CD14-positive monocyte (primary cell): ENCODE measurements at regions of chr19 and their contacts with region 1.

Region 1: DNA sequence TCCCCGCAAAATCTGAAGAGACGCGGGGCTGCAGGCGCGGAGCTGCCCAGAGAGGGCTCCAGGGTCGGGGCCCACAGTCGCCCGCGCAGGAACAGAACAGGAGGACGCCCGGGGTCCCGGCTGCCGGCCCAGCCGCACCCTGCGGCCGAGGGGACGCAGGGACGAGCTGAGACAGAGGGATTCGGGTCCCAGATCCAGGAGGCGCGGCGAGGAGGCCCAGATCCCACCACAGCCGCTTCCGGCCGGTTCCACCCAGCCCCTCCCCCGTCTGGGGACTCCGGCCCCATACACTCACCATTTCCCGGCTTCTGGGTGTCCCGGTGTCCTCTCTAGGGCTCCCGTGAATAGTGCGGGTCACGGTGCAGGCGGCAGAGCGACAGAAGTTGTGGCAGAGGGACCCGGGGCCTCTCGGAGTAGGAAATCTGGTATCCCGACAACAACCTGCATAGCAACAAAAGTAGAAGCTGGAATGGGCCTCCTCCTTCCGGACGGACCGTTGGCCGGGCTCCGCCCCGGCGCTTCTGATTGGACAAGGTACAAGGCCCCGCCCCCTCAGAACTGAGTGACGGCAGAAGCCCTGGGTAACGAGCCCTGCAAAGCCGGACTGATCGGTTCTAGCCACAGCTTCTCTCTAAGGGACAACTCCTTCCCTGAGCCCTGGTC is at the start of gene ZNF20:
- DNase-seq: peak; percentile 86 to 93 (median 86)
- H3K4me3 ChIP-seq: peak within 1 kb of the TSS; percentile 84 to 99 (median 93)
- H3K4me3 Mint-ChIP-seq: peak within 1 kb of the TSS; percentile 96 to 97
- H3K27ac ChIP-seq: peak within 1 kb of the TSS; percentile 32 to 78
- H3K27ac Mint-ChIP-seq: peak within 1 kb of the TSS; percentile 83 to 94 (median 89)
- H3K4me1 ChIP-seq: peaks cover 23 to 25% of the 10 kb centered on the region in 2 donors
- H3K4me1 Mint-ChIP-seq: peaks cover 36% of the 10 kb centered on the region
- H3K27me3 ChIP-seq: no peaks in the 10 kb centered on the region
- H3K27me3 Mint-ChIP-seq: peaks cover 0 to 3% (median 1%) of the 10 kb centered on the region in 3 donors
- CTCF ChIP-seq: no peak
- polyA plus RNA-seq, gene ZNF20: 0.86 to 2.6 (median 1.3) TPM

Region 2: DNA sequence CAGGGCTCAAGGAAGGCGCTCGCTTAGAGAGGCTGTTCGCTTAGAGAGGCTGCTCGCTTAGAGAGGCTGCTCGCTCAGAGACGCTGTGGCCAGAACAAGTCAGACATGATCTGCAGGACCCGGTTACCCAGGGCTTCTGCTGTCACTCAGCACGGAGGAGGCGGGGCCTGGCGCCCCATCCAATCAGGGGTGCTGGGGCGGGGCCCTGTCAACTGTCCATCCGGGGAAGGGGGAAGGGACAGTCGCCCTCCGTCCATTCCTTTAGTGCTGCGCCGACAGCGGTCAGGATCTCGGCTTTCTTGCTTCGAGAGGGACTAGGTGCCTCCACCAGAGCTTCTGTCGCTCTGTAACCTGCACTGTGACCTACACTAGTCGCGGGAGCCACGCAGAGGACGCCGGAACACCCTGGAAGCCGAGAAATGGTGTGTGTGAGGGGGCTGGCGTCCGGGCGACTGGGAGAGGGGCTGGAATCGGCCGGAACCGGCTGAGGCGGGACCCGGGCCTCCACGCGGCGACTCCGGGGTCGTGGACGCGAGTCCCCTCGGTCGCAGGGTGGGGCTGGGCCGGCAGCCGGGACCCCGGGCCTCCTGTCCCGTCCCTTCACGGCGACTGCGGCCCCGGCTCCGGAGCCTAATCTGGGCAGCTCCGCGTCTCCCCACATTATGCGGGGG is 325.9 kb before region 1 on chr19 and contains the start of gene ZNF440:
- intact Hi-C with region 1: loop called in 1 of 2 experiments (anchors 5 kb)
- DNase-seq: peak; percentile 80 to 89 (median 80)
- H3K4me3 ChIP-seq: peak within 1 kb of the TSS; percentile 71 to 92 (median 84)
- H3K4me3 Mint-ChIP-seq: peak within 1 kb of the TSS; percentile 93 to 95
- H3K27ac ChIP-seq: peak within 1 kb of the TSS; percentile 72 to 80
- H3K27ac Mint-ChIP-seq: peak within 1 kb of the TSS; percentile 81 to 96 (median 89)
- H3K4me1 ChIP-seq: peaks cover 9 to 15% of the 10 kb centered on the region in 2 donors
- H3K4me1 Mint-ChIP-seq: peaks cover 20% of the 10 kb centered on the region
- H3K27me3 ChIP-seq: no peaks in the 10 kb centered on the region
- H3K27me3 Mint-ChIP-seq: peaks cover 0 to 2% (median 0%) of the 10 kb centered on the region in 3 donors
- CTCF ChIP-seq: no peak
- polyA plus RNA-seq, gene ZNF440: 2.4 to 4.1 (median 3.4) TPM

Region 3: DNA sequence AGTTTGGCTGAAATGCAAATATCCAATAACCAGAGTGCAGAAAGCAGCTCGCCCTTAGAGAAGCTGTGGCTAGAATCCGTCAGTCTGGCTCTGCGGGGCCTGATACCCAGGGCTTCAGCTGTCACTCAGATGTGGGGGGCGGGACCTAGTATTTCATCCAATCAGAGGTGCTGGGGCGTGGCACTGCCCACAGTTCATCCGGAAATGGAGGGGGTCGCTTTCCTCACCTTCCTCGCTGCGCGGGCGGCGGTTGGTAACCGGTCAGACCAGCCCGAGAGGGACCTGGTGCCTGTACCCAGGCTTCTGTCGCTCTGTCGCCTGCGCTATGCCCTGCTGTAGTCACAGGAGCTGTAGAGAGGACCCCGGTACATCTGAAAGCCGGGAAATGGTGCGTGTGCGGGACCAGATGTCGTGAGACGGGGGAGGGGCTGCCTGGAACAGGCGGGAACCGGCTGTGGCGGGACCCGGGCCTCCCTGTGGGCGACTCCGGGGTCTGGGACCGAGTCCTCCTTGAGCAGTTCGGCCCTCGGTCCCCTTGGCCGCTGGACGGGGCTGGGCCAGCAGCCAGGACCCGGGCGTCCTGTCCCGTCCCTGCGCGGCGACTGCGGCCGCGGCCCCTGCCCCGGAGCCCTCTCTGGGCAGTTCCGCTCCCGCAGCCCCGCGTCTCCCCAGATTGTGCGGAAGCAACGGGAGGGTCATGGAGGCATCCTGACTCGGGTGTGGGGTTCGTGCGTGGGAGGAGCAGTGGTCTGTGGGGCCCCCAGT is 214.9 kb before region 1 on chr19 and contains the start of gene ZNF700:
- intact Hi-C with region 1: loop called (anchors 1 to 5 kb)
- DNase-seq: peak; percentile 81 to 86 (median 81)
- H3K4me3 ChIP-seq: peak within 1 kb of the TSS; percentile 83 to 97 (median 91)
- H3K4me3 Mint-ChIP-seq: peak within 1 kb of the TSS; percentile 95 to 96
- H3K27ac ChIP-seq: peak within 1 kb of the TSS; percentile 93 to 95
- H3K27ac Mint-ChIP-seq: peak within 1 kb of the TSS; percentile 91 to 99 (median 97)
- H3K4me1 ChIP-seq: peaks cover 26 to 37% of the 10 kb centered on the region in 2 donors
- H3K4me1 Mint-ChIP-seq: peaks cover 30% of the 10 kb centered on the region
- H3K27me3 ChIP-seq: no peaks in the 10 kb centered on the region
- H3K27me3 Mint-ChIP-seq: no peaks in the 10 kb centered on the region
- CTCF ChIP-seq: no peak
- polyA plus RNA-seq, gene ZNF700: 1.1 to 18.3 (median 1.2) TPM

Region 4: GRCh38 chr19:11987405-11988281 is 152.4 kb before region 1 on chr19:
- intact Hi-C with region 1: no loop called
- DNase-seq: peak; percentile 90 to 96 (median 94)
- H3K4me3 ChIP-seq: peak overlapping the region; percentile 58 to 99 (median 83)
- H3K4me3 Mint-ChIP-seq: peak overlapping the region; percentile 97 to 99
- H3K27ac ChIP-seq: peak overlapping the region; percentile 81 to 92
- H3K27ac Mint-ChIP-seq: peak overlapping the region; percentile 91 to 98 (median 95)
- H3K4me1 ChIP-seq: peaks cover 9 to 13% of the 10 kb centered on the region in 2 donors
- H3K4me1 Mint-ChIP-seq: peaks cover 15% of the 10 kb centered on the region
- H3K27me3 ChIP-seq: no peaks in the 10 kb centered on the region
- H3K27me3 Mint-ChIP-seq: peaks cover 0 to 8% (median 2%) of the 10 kb centered on the region in 3 donors
- CTCF ChIP-seq: no peak

Region 5: DNA sequence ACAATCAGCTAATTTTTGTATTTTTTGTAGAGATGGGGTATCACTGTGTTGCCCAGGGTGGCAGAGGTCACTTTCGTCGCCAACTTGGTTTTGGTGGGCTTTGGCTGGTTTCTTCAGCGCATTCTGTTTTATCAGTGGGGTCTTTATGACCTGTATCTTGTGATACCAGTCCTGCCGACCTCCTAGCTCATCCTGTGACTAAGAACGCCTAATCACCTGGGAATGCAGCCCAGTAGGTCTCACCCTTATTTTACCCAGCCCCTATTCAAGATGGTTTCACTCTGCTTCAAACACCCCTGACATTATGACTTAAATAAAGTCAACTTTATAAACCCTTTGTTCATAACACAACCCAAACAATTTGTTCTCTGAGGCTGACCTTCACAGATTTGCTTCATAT is 84.2 kb before region 1 on chr19:
- intact Hi-C with region 1: loop called (anchors 2 kb)
- DNase-seq: no peak
- H3K4me3 ChIP-seq: no peak overlapping the region
- H3K4me3 Mint-ChIP-seq: no peak overlapping the region
- H3K27ac ChIP-seq: no peak overlapping the region
- H3K27ac Mint-ChIP-seq: no peak overlapping the region
- H3K4me1 ChIP-seq: peaks cover 9 to 20% of the 10 kb centered on the region in 2 donors
- H3K4me1 Mint-ChIP-seq: peaks cover 27% of the 10 kb centered on the region
- H3K27me3 ChIP-seq: peaks cover 0 to 3% of the 10 kb centered on the region in 2 donors
- H3K27me3 Mint-ChIP-seq: peaks cover 19 to 46% (median 20%) of the 10 kb centered on the region in 3 donors
- CTCF ChIP-seq: no peak

Region 6: GRCh38 chr19:12112701-12113100 is 27.3 kb before region 1 on chr19:
- intact Hi-C with region 1: no loop called
- DNase-seq: no peak
- H3K4me3 ChIP-seq: peak overlapping the region in 1 of 3 experiments; percentile 10
- H3K4me3 Mint-ChIP-seq: no peak overlapping the region
- H3K27ac ChIP-seq: no peak overlapping the region
- H3K27ac Mint-ChIP-seq: no peak overlapping the region
- H3K4me1 ChIP-seq: no peaks in the 10 kb centered on the region
- H3K4me1 Mint-ChIP-seq: no peaks in the 10 kb centered on the region
- H3K27me3 ChIP-seq: no peaks in the 10 kb centered on the region
- H3K27me3 Mint-ChIP-seq: peaks cover 0 to 1% (median 0%) of the 10 kb centered on the region in 3 donors
- CTCF ChIP-seq: no peak

Region 7: GRCh38 chr19:12230751-12231733 is 91.0 kb after region 1 on chr19:
- intact Hi-C with region 1: no loop called
- DNase-seq: no peak
- H3K4me3 ChIP-seq: no peak overlapping the region
- H3K4me3 Mint-ChIP-seq: no peak overlapping the region
- H3K27ac ChIP-seq: no peak overlapping the region
- H3K27ac Mint-ChIP-seq: no peak overlapping the region
- H3K4me1 ChIP-seq: no peaks in the 10 kb centered on the region
- H3K4me1 Mint-ChIP-seq: no peaks in the 10 kb centered on the region
- H3K27me3 ChIP-seq: no peaks in the 10 kb centered on the region
- H3K27me3 Mint-ChIP-seq: peaks cover 0 to 3% (median 0%) of the 10 kb centered on the region in 3 donors
- CTCF ChIP-seq: no peak

Region 8: DNA sequence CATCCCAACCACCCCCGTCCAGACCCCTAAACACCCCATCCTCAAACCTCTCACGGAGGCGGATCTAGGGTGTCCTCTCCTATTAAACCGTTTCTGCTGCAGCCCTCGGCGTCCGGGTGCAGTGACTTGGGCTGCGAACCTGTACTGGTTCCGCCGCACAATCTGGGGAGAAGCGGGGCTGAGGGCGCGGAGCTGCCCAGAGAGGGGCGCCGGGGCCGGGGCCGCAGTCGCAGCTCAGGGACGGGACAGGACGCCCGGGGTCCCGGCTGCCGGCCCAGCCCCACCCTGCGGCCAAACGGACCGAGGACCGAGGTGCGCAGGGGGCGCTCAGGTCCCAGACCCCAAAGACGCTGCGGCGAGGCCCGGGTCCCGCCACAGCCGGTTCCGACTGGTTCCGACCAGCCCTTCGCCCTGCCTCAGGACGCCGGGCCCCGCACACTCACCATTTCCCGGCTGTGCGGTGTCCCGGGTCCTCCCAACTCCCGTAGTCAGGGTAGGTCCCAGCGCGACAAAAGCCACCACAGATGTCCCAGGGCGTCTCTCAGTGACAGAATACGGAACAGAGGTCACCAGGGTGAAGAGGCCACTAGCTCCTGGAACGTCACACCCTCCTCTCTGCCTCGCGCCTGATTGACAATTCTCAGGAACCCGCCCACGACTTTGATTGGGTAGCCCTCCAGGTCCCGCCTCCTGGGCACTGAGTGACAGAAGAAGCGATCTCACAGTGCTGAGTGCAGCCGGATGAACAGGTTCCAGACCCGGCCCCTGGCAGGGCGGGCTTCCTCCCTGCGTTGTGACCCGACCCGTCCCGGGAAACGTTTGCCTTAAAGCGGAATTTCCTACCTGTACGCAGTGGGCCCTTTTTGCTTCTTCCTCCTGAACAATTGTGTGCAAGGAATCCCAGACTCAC is 154.5 kb after region 1 on chr19 and contains the start of gene ZNF44:
- intact Hi-C with region 1: no loop called
- DNase-seq: peak; percentile 94 to 97 (median 96)
- H3K4me3 ChIP-seq: peak within 1 kb of the TSS; percentile 76 to 91 (median 80)
- H3K4me3 Mint-ChIP-seq: peak within 1 kb of the TSS; percentile 100
- H3K27ac ChIP-seq: peak within 1 kb of the TSS; percentile 69 to 82
- H3K27ac Mint-ChIP-seq: peak within 1 kb of the TSS; percentile 96 to 100 (median 98)
- H3K4me1 ChIP-seq: peaks cover 8 to 11% of the 10 kb centered on the region in 2 donors
- H3K4me1 Mint-ChIP-seq: peaks cover 34% of the 10 kb centered on the region
- H3K27me3 ChIP-seq: no peaks in the 10 kb centered on the region
- H3K27me3 Mint-ChIP-seq: peaks cover 0 to 8% (median 6%) of the 10 kb centered on the region in 3 donors
- CTCF ChIP-seq: no peak
- polyA plus RNA-seq, gene ZNF44: 6.7 to 10.1 (median 9.7) TPM